GM18951 (cell line): ENCODE measurements at regions of chr9 and their contacts with region 1.

Region 1: GRCh38 chr9:94681508-94681907 is 42.2 kb upstream of the FBP1 start:
- POLR2A ChIP-seq: no peak

Region 2: GRCh38 chr9:94498801-94499453 is 182.6 kb before region 1 on chr9:
- in situ Hi-C with region 1: no loop called
- POLR2A ChIP-seq: no peak

Region 3: GRCh38 chr9:94603259-94604160 is 78.0 kb before region 1 on chr9:
- in situ Hi-C with region 1: no loop called
- POLR2A ChIP-seq: no peak

Region 4: DNA sequence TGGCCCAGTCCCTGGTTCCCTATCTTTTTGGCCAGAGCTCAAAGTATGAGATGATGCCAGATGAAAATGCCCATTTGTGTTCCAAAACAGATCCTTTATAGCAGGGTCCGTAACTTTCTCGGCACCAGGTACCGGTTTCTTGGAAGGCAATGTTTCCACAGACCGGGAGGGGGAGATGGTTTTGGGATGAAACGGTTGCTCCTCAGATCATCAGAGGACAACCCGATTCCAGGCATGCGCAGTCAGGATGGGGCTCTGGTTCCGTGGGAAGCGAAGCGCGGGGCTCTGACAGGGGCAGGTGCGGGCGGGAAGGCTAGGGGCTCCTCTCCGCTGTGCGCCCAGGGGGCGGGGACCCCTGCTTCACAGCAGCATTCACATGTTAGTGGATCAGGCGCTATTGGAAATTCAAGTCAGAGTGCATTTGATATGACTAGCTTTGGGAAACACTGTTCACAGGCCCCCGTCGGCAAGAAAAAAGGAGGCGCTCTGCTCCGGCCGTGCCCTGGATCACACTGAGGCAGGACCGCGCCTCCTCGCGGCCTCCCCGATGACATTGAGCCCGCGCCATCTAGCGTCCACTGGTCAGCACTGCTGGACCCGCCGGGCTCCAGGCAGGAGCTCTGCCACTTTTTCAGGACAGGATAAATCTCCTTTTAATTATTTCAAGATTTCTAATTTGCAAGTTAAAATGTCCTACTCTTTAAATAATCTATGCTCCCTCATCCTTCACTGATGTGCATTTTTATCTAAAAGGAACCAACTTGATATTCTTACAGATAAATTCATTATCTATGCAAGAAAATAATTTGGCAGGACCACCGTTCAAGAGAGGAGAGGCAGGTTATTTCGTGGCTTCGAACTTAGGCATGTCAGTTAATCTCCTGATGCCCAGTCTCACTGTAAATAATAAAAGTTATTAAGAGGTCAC is 446.0 kb after region 1 on chr9:
- in situ Hi-C with region 1: loop called (anchors 5 kb)
- POLR2A ChIP-seq: no peak